ENCODE measurements at regions of chrX and their contacts with region 1.

Region 1: GRCh38 chrX:152830312-152831305 is at the starts of genes CETN2 and NSDHL:
- DNase-seq: peak; percentile 96
- ATAC-seq: peak; percentile 99
- H3K4me3 Mint-ChIP-seq: peak within 1 kb of the TSS; percentile 83
- H3K27ac Mint-ChIP-seq: peak within 1 kb of the TSS; percentile 78
- H3K4me1 Mint-ChIP-seq: peaks cover 19% of the 10 kb centered on the region
- H3K27me3 Mint-ChIP-seq: no peaks in the 10 kb centered on the region
- total RNA-seq, gene CETN2: 11.2 to 13.1 TPM
- total RNA-seq, gene NSDHL: 20.0 to 20.6 TPM

Region 2: DNA sequence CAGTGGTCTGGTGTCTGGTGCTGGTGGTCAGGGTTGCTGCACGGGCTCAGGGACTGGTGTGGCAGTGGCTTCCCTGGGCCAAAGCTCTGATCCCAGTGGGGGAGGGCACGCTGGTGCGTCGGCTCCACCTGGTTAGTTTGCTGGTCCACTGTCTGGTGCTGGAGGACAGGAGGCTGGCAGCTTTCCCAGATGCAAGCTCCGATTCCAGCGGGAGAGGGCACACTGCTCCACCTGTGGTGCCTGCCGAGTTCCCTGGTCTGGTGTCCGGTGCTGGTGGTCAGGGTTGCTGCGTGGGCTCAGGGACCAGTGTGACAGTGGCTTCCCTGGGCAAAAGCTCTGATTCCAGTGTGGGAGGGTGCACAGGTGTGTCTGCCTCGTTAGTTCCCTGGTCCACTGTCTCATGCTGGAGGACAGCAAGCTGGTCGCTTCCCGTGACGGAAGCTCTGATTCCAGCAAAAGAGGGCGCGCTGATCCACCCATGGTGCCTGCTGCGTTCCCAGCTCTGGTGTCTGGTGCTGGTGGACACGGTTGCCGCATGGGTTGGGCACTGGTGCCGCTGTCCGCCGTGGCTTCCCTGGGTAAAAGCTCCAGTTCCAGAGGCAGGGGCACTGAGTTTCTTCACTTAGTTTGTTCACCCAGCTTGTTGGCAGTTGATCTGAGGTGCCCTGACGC is 1427.8 kb before region 1 on chrX:
- CTCF ChIA-PET with region 1: no interaction called
- POLR2A ChIA-PET with region 1: no interaction called
- intact Hi-C with region 1: loop called (anchors 5 to 10 kb)
- DNase-seq: no peak
- ATAC-seq: no peak
- H3K4me3 Mint-ChIP-seq: no peak overlapping the region
- H3K27ac Mint-ChIP-seq: peak overlapping the region; percentile 10
- H3K4me1 Mint-ChIP-seq: peaks cover 29% of the 10 kb centered on the region
- H3K27me3 Mint-ChIP-seq: no peaks in the 10 kb centered on the region

Measured in activated CD4-positive, alpha-beta T cell treated with anti-CD3 and anti-CD28 coated beads for 36 hours (primary cell).